Activated CD4-positive, alpha-beta T cell treated with anti-CD3 and anti-CD28 coated beads for 36 hours (primary cell): ENCODE measurements at regions of chr19 and their contacts with region 1.

Region 1: DNA sequence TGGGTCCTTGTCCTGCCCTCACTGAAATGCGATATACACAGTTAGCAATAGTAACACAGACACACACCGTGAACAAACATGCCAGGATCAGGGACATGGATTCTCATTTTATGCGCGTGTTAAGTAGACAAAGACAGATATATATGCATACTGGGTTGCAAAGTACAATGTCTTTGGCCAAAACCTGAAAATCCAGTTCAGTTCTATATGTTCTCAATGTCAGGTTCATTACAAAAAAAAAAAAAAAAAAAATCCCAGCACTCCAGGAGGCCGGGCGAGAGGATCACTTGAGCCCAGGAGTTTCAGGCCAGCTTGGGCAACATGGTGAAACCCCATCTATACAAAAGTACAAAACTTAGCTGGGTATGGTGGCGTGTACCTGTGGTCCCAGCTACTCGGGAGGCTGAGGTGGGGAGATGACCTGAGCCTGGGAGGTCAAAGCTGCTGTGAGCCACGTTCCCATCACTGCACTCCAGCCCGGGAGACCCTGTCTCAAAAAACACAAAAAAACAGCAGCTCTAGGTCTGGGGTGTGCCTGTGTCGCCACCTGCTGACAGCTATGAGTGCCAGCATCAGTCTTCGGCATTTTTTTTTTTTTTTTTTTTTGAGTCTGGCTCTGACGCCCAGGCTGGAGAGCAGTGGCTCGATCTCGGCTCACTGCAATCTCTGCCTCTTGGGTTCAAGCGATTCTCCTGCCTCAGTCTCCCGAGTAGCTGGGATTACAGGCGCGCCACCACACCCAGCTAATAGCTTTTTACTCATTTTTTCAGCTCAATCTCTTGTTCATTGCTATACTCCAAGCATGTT is 10.3 kb downstream of the AP2S1 start:
- DNase-seq: peak; percentile 72
- ATAC-seq: peak; percentile 94
- H3K4me3 Mint-ChIP-seq: no peak overlapping the region
- H3K27ac Mint-ChIP-seq: no peak overlapping the region
- H3K4me1 Mint-ChIP-seq: peaks cover 4% of the 10 kb centered on the region
- H3K27me3 Mint-ChIP-seq: no peaks in the 10 kb centered on the region

Region 2: DNA sequence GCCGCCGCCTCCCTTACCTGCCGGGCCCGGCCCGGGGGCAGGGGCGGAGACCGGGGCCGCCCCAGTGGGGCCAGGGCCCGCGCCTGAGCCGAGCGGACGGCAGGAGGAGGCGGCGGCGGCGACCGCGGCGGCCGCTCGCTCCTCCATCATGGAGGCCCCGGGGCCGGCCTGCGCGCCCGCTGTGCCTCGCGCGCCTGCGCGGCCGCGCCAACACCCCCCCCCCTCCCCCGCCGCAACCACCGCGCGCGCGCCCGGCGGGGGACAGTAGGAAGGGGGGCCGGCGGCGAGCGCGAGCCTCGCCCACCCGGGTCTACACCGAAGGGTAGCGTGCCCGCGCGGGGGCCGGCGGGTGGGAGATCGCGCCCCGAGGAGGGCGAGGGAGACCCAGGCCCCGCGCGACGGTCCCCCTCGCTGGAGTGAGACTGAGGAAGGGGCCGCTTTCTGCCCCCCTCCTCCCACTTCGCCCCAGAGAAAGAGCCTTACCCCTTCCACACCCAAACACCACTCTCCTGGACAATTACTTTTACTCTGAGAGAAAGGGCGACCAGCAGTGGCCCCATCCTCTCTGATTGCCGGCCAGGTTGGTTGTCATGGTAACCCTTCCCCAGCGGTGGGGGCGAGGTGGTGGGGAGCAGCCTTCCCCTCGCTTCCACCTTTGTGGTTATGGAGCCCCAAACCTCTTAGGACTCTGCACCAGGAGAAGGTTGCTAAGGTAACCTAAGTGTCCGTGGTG is 93.9 kb before region 1 on chr19 and contains the start of gene STRN4:
- CTCF ChIA-PET with region 1: interaction called, 18 read pairs
- POLR2A ChIA-PET with region 1: interaction called, 5 read pairs
- intact Hi-C with region 1: loop called in 1 of 2 experiments (anchors 1 kb)
- DNase-seq: peak; percentile 73
- ATAC-seq: peak; percentile 68
- H3K4me3 Mint-ChIP-seq: peak within 1 kb of the TSS; percentile 89
- H3K27ac Mint-ChIP-seq: peak within 1 kb of the TSS; percentile 89
- H3K4me1 Mint-ChIP-seq: peaks cover 49% of the 10 kb centered on the region
- H3K27me3 Mint-ChIP-seq: no peaks in the 10 kb centered on the region
- total RNA-seq, gene STRN4: 56.4 to 56.8 TPM

Region 3: GRCh38 chr19:46753420-46754155 is 86.8 kb before region 1 on chr19:
- CTCF ChIA-PET with region 1: interaction called, 41 read pairs
- POLR2A ChIA-PET with region 1: interaction called, 4 read pairs
- intact Hi-C with region 1: loop called (anchors 1 kb)
- DNase-seq: peak; percentile 86
- ATAC-seq: peak; percentile 91
- H3K4me3 Mint-ChIP-seq: no peak overlapping the region
- H3K27ac Mint-ChIP-seq: no peak overlapping the region
- H3K4me1 Mint-ChIP-seq: peaks cover 6% of the 10 kb centered on the region
- H3K27me3 Mint-ChIP-seq: no peaks in the 10 kb centered on the region

Region 4: DNA sequence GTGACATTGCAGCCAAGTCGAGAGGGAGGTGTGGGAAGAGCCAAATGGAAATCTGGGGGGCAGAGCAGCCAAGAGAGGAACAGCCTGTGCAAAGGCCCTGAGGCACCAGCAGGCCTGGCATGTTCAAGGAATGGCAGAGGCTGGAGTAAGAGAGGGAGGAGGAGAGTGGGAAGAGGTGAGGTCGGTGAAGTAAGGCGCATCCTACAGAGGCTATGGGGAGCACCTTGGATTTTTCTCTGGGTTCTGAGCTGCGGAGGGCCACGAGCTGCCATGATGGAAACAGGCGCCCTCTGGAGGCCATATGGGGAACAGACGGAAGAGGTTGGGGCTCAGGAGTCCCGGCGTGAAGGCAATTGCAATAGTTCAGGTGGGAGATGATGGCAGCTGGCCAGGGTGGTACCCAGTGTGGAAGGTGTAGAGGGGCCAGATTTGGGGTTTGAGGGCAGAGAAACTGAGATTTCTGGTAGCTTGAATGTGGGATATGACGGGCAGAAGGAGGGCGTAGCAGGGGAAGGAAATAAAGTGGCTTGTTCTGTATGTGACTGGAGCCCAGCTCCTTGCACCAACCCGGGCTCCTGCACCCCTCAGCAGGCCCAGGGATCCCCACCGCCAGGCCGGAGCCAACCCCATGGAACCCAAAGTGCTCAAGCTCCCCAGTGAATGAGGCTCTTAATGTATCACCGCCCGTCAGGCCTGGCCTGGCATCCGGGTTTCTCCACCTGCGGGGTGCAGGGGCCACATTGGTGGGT is 73.6 kb before region 1 on chr19:
- CTCF ChIA-PET with region 1: interaction called, 43 read pairs
- POLR2A ChIA-PET with region 1: no interaction called
- intact Hi-C with region 1: no loop called
- DNase-seq: peak; percentile 78
- ATAC-seq: peak; percentile 92
- H3K4me3 Mint-ChIP-seq: no peak overlapping the region
- H3K27ac Mint-ChIP-seq: no peak overlapping the region
- H3K4me1 Mint-ChIP-seq: no peaks in the 10 kb centered on the region
- H3K27me3 Mint-ChIP-seq: no peaks in the 10 kb centered on the region

Region 5: DNA sequence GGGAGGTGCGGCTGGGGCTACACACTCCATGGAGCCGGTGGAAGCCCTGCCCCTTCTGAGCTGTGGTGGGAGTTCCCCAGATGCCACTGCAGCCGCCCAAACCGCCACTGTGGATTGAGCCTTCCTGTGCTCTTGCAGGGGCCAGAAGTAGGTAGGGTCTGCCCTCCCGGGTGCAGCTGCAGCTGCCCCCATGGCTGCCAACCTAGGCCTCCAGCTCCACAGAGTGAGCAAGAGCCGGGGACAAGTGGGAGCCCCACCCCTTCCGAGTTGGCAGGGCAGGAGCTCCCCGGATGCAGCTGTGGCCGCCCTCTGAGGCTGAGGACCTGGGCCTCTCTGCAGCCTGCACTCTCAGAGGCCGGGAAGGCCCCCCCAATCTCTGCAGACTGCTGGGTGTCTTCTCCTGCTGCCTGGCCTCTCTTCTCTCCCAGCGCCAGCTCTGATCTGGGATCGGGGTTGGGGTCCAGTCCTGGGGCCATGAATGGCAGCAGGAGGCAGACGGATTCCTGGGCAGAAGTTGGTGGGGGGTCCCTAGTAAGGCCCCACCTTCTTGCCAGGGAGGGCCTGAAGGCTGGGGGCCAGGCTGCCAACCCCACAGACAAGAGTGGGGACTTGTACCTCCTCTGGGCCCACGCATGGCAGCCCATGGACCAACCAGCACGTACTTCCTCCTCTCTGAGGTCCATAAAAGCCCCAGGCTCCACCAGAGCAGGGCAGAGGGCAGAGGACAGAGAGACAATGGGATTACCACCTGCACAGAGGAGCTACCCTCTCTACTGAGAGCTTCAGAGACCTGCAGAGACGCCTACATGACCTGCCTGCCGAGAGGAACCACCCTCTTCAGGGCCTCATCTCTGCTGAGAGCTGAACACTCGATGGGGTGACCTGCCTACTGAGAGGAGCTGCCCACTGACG is 18.6 kb before region 1 on chr19:
- CTCF ChIA-PET with region 1: interaction called, 12 read pairs
- POLR2A ChIA-PET with region 1: interaction called, 4 read pairs
- intact Hi-C with region 1: no loop called
- DNase-seq: peak; percentile 74
- ATAC-seq: peak; percentile 79
- H3K4me3 Mint-ChIP-seq: no peak overlapping the region
- H3K27ac Mint-ChIP-seq: peak overlapping the region; percentile 37
- H3K4me1 Mint-ChIP-seq: peaks cover 27% of the 10 kb centered on the region
- H3K27me3 Mint-ChIP-seq: no peaks in the 10 kb centered on the region

Region 6: GRCh38 chr19:46828484-46828883 is 11.9 kb before region 1 on chr19:
- CTCF ChIA-PET with region 1: interaction called, 25 read pairs
- POLR2A ChIA-PET with region 1: no interaction called
- intact Hi-C with region 1: no loop called
- DNase-seq: peak; percentile 83
- ATAC-seq: peak; percentile 82
- H3K4me3 Mint-ChIP-seq: no peak overlapping the region
- H3K27ac Mint-ChIP-seq: no peak overlapping the region
- H3K4me1 Mint-ChIP-seq: peaks cover 15% of the 10 kb centered on the region
- H3K27me3 Mint-ChIP-seq: no peaks in the 10 kb centered on the region

Region 7: DNA sequence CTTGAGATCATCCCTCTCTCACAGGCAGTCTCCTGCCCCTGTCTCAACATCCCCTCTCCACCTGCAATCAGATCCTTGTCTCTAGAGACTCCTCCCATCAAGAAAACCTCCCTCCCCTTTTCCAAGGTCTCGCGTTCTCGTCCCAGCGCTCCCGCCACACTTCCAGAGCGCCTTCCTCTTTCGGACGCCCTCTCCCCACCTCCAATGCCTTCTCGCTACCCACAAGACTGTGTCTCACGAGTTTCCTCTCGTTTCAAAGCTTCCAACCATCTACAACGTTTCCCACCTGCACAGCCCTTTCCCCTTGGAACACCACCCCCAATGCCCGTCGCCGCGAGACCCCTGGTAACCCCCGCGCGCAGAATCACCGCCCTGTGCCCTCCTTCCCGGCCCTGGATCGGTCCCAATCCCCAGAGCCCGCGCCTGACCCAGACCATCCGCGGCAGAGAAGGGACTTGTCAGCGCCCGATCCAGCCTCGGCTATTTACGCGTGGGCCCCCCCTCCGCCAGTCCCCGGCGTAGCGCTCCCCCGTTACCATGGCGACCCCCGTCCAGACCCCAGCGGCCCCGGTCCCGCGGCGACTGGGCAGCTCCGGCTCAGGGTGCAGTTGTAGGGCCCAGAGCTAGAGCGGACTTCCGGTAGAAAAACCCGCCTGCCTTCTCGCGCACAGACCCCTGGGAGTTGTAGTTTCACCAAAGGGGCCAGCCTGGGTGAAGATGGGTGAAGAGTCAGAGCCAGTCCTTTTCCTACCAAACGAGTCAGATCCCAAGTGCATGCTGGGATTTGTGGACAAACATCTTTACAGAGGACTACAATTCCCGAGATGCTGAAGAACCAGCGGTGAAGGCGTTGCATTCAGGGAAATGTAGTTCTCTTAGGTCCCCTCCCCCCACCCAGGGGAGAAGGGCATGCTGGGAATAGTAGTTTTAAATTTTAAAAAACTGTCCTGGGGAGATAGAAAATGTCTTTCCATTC is 10.2 kb after region 1 on chr19 and contains the start of gene AP2S1:
- CTCF ChIA-PET with region 1: interaction called, 13 read pairs
- POLR2A ChIA-PET with region 1: interaction called, 3 read pairs
- intact Hi-C with region 1: no loop called
- DNase-seq: peak; percentile 95
- ATAC-seq: peak; percentile 97
- H3K4me3 Mint-ChIP-seq: peak within 1 kb of the TSS; percentile 92
- H3K27ac Mint-ChIP-seq: peak within 1 kb of the TSS; percentile 64
- H3K4me1 Mint-ChIP-seq: peaks cover 21% of the 10 kb centered on the region
- H3K27me3 Mint-ChIP-seq: no peaks in the 10 kb centered on the region
- total RNA-seq, gene AP2S1: 102 to 104 TPM